ENCODE measurements at regions of chr2 and their contacts with region 1.

Region 1: GRCh38 chr2:226835796-226836547 is at the start of gene RHBDD1:
- DNase-seq: peak; percentile 97
- ATAC-seq: peak; percentile 87
- H3K4me3 Mint-ChIP-seq: peak within 1 kb of the TSS; percentile 88
- H3K27ac Mint-ChIP-seq: peak within 1 kb of the TSS; percentile 95
- H3K4me1 Mint-ChIP-seq: peaks cover 54% of the 10 kb centered on the region
- H3K27me3 Mint-ChIP-seq: no peaks in the 10 kb centered on the region
- total RNA-seq, gene RHBDD1: 38.1 to 49.0 TPM

Region 2: GRCh38 chr2:224946895-224947294 is 1889.1 kb before region 1 on chr2:
- CTCF ChIA-PET with region 1: no interaction called
- POLR2A ChIA-PET with region 1: no interaction called
- intact Hi-C with region 1: loop called (anchors 5 to 10 kb)
- DNase-seq: no peak
- ATAC-seq: peak; percentile 63
- H3K4me3 Mint-ChIP-seq: peak overlapping the region; percentile 79
- H3K27ac Mint-ChIP-seq: peak overlapping the region; percentile 91
- H3K4me1 Mint-ChIP-seq: peaks cover 61% of the 10 kb centered on the region
- H3K27me3 Mint-ChIP-seq: no peaks in the 10 kb centered on the region

Region 3: DNA sequence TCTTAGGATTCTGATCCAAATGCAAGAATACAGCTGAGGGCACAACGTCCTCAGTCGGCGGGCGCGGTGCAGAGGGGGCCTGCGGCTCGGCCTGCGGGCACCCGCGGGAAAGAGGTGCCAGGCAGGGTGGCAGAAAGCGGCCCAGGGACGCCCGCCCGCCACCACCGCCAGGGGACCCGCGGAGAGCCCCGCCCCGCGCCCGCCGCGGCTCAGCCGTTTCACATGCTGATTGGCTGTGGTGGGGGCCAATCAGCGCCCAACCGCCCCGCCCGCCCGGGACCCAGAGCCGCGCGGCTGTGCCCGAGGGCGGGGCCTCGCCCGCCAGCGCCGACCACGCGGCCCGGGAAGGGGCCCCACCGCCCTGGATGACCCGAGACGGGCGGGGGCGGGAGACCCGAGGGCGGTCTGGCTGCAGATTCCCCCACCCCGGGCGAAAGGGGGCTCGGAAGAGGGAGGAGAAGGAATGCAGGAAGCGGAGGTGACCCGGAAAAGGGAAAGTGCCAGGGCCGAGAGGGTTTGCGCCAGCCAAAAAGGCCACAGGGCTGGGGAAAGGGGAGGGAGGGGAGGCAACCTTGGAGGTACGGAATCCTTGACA is 44.4 kb before region 1 on chr2:
- CTCF ChIA-PET with region 1: interaction called, 5 read pairs
- POLR2A ChIA-PET with region 1: interaction called, 4 read pairs
- intact Hi-C with region 1: loop called (anchors 1 to 2 kb)
- DNase-seq: peak; percentile 96
- ATAC-seq: peak; percentile 98
- H3K4me3 Mint-ChIP-seq: peak overlapping the region; percentile 79
- H3K27ac Mint-ChIP-seq: peak overlapping the region; percentile 96
- H3K4me1 Mint-ChIP-seq: peaks cover 41% of the 10 kb centered on the region
- H3K27me3 Mint-ChIP-seq: no peaks in the 10 kb centered on the region

Region 4: DNA sequence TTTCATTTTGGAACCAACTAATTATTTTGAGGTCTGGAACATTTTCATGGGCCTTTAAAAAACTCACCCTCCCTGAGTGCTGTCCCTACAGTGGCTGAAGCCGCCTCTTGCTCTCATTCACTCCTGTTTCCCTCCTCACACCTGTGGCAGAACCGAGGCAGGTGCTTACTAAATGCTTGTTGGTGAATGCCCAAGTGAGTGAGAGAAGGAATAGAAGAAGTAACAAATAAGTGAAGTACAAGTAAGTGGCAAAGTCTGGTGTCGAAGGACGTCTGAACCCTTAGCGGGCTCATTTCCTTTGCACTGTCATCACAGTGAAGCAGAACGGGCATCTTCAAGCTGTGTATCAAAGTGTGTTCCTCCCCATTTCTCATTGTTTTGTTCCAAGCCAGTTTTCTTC is 135.1 kb after region 1 on chr2:
- CTCF ChIA-PET with region 1: no interaction called
- POLR2A ChIA-PET with region 1: no interaction called
- intact Hi-C with region 1: loop called in 1 of 2 experiments (anchors 5 kb)
- DNase-seq: no peak
- ATAC-seq: peak; percentile 36
- H3K4me3 Mint-ChIP-seq: no peak overlapping the region
- H3K27ac Mint-ChIP-seq: peak overlapping the region; percentile 33
- H3K4me1 Mint-ChIP-seq: peaks cover 22% of the 10 kb centered on the region
- H3K27me3 Mint-ChIP-seq: no peaks in the 10 kb centered on the region

Region 5: GRCh38 chr2:227324995-227325838 is 489.2 kb after region 1 on chr2 and contains the start of gene MFF:
- CTCF ChIA-PET with region 1: no interaction called
- POLR2A ChIA-PET with region 1: no interaction called
- intact Hi-C with region 1: loop called in 1 of 2 experiments (anchors 1 kb)
- DNase-seq: peak; percentile 97
- ATAC-seq: peak; percentile 97
- H3K4me3 Mint-ChIP-seq: peak within 1 kb of the TSS; percentile 89
- H3K27ac Mint-ChIP-seq: peak within 1 kb of the TSS; percentile 91
- H3K4me1 Mint-ChIP-seq: peaks cover 27% of the 10 kb centered on the region
- H3K27me3 Mint-ChIP-seq: no peaks in the 10 kb centered on the region
- total RNA-seq, gene MFF: 78.3 to 104 TPM

Region 6: GRCh38 chr2:227460070-227460485 is 624.1 kb after region 1 on chr2:
- CTCF ChIA-PET with region 1: no interaction called
- POLR2A ChIA-PET with region 1: no interaction called
- intact Hi-C with region 1: loop called in 1 of 2 experiments (anchors 5 kb)
- DNase-seq: peak; percentile 86
- ATAC-seq: peak; percentile 37
- H3K4me3 Mint-ChIP-seq: peak overlapping the region; percentile 60
- H3K27ac Mint-ChIP-seq: peak overlapping the region; percentile 85
- H3K4me1 Mint-ChIP-seq: peaks cover 86% of the 10 kb centered on the region
- H3K27me3 Mint-ChIP-seq: no peaks in the 10 kb centered on the region

Measured in activated CD4-positive, alpha-beta T cell treated with anti-CD3 and anti-CD28 coated beads for 36 hours (primary cell).